GM12878 (cell line): ENCODE measurements at regions of chr19 and their contacts with region 1.

Region 1: DNA sequence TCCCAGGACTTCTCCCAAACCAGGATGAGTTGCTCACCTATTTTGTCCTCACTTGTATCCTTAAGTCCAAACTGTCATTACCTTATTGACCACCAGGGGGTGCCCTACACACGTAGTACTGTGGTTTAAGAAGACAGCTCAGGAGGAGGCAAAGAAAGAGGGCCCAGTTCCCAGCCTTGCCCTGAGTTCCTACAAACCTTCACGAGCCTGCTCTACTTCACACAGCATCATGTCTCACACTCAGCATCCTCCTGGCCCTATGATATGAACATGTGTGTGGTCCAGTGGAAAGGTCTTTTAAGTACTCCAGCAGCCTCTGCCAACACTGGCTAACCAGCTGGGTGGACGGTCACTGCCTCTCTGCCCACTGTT is 8.1 kb upstream of the ZNF784 start:
- DNase-seq: peak; percentile 75
- ATAC-seq: peak; percentile 75
- H3K4me3 ChIP-seq: no peak overlapping the region
- H3K27ac ChIP-seq: no peak overlapping the region
- H3K4me1 ChIP-seq: peaks cover 19% of the 10 kb centered on the region
- H3K27me3 ChIP-seq: no peaks in the 10 kb centered on the region
- CTCF ChIP-seq: peak; percentile 75 to 85 (median 76)
- EP300 ChIP-seq: no peak
- POLR2A ChIP-seq: no peak
- RAD21 ChIP-seq: peak; percentile 91

Region 2: DNA sequence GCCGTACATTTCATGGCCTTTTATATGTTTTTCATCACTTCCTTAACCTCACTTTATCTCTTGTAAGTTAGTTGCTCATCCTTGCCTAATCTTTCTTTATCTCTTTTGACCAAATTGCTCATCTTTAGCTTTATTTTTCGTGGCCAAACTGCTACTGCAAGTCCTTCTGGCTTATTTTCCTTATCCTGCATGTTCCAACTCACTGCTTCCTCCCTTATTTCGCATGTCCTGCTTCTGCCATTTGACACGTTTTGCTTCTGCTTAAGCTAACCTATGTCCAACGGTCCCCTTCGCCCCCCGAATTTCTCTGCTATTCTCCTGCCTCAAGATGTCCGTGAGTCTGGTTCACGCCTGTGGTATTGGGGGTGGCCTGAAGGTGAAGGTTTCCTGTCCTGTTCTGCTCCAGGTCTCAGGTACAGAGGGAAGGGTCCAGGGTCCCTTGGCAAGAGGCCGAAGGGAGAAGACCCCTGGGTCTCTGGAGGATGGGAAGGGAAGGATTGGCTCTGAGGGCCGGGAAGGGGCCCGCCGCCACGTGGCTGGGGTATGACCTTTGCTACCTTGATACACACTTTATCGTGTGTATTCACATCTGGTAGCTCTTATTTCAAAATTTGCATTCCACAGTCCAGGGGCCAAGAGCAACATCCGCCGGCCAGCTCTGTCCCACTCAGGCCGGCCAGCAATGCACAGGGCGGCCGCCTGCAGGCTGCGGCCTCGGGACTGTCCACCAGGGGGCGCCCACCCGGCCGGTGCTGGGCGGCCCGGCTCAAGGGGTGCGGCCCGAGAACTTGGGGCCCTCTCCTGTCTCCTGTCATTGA is 165.0 kb before region 1 on chr19:
- CTCF ChIA-PET with region 1: interaction called, 28 read pairs
- POLR2A ChIA-PET with region 1: no interaction called
- RAD21 ChIA-PET with region 1: interaction called, 13 read pairs
- SMC1A ChIA-PET with region 1: interaction called, 8 read pairs
- in situ Hi-C with region 1: no loop called
- intact Hi-C with region 1: loop called (anchors 5 kb)
- DNase-seq: no peak
- ATAC-seq: peak; percentile 99
- H3K4me3 ChIP-seq: no peak overlapping the region
- H3K27ac ChIP-seq: no peak overlapping the region
- H3K4me1 ChIP-seq: no peaks in the 10 kb centered on the region
- H3K27me3 ChIP-seq: no peaks in the 10 kb centered on the region
- CTCF ChIP-seq: peak; percentile 84 to 94 (median 91)
- EP300 ChIP-seq: no peak
- POLR2A ChIP-seq: no peak
- RAD21 ChIP-seq: peak; percentile 63

Region 3: DNA sequence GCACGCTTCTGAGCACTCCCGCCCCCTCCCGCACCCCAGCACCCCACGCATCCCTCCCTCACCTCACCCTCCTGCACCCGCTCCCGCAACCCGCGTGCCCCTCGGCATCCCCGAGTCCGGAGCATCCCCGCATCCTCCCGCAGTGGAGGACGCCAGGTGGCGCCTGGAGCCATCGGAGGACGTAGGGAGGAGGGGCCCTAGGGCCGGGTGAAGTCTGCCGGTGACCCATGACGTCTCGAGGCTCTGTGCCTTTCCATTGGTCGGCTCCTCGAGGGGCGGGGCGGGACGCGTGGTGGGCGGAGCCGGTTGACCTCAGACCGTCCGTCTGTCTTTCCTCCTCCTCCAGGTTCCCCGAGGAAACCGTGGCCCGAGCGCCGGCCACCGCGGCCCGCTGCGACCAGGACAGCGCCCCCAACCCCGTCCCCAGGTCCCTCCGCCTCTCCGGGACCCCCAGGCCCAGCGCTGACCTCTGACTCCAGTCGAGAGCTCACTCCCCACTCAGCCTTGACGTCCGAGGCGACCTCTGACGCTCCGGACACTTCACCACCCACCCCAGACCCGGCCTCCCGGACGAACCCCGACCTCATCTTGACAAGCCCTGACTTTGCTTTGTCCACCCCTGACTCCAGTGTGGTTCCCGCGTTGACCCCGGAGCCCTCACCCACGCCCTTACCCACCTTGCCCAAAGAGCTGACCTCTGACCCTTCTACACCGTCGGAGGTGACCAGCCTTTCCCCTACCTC is 115.4 kb before region 1 on chr19:
- CTCF ChIA-PET with region 1: interaction called, 57 read pairs
- POLR2A ChIA-PET with region 1: interaction called, 8 read pairs
- RAD21 ChIA-PET with region 1: interaction called, 20 read pairs
- SMC1A ChIA-PET with region 1: interaction called, 21 read pairs
- in situ Hi-C with region 1: loop called (anchors 5 kb)
- intact Hi-C with region 1: loop called (anchors 1 kb)
- DNase-seq: peak; percentile 66
- ATAC-seq: peak; percentile 100
- H3K4me3 ChIP-seq: peak overlapping the region; percentile 66; the same call in 1 of the 2 replicates
- H3K27ac ChIP-seq: peak overlapping the region; percentile 62
- H3K4me1 ChIP-seq: 0 out of 2 replicates have a peak, but pooled peaks cover 4% of the 10 kb centered on the region
- H3K27me3 ChIP-seq: no peaks in the 10 kb centered on the region
- CTCF ChIP-seq: peak; percentile 80 to 97 (median 96); a peak in 5 of 6 replicates
- EP300 ChIP-seq: peak in 1 of 2 experiments; percentile 16; a peak in 1 of 4 replicates
- POLR2A ChIP-seq: peak; percentile 53; the same call in 1 of the 2 replicates
- RAD21 ChIP-seq: peak; percentile 96

Region 4: GRCh38 chr19:55643348-55644176 is 11.1 kb after region 1 on chr19 and contains the start of gene ZNF581:
- CTCF ChIA-PET with region 1: interaction called, 52 read pairs
- POLR2A ChIA-PET with region 1: interaction called, 28 read pairs
- RAD21 ChIA-PET with region 1: interaction called, 36 read pairs
- SMC1A ChIA-PET with region 1: interaction called, 24 read pairs
- in situ Hi-C with region 1: no loop called
- intact Hi-C with region 1: no loop called
- DNase-seq: peak; percentile 59
- ATAC-seq: peak; percentile 60
- H3K4me3 ChIP-seq: peak within 1 kb of the TSS; percentile 95
- H3K27ac ChIP-seq: peak within 1 kb of the TSS; percentile 64
- H3K4me1 ChIP-seq: peaks cover 36% of the 10 kb centered on the region
- H3K27me3 ChIP-seq: no peaks in the 10 kb centered on the region
- CTCF ChIP-seq: no peak
- EP300 ChIP-seq: no peak
- POLR2A ChIP-seq: peak; percentile 57
- RAD21 ChIP-seq: no peak
- polyA plus RNA-seq, gene ZNF581: 4.7 to 18.1 TPM

Region 5: GRCh38 chr19:55809381-55810058 is 177.1 kb after region 1 on chr19:
- CTCF ChIA-PET with region 1: interaction called, 80 read pairs
- POLR2A ChIA-PET with region 1: no interaction called
- RAD21 ChIA-PET with region 1: interaction called, 22 read pairs
- SMC1A ChIA-PET with region 1: interaction called, 31 read pairs
- in situ Hi-C with region 1: no loop called
- intact Hi-C with region 1: loop called (anchors 2 kb)
- DNase-seq: no peak
- ATAC-seq: peak; percentile 94
- H3K4me3 ChIP-seq: no peak overlapping the region
- H3K27ac ChIP-seq: no peak overlapping the region
- H3K4me1 ChIP-seq: no peaks in the 10 kb centered on the region
- H3K27me3 ChIP-seq: no peaks in the 10 kb centered on the region
- CTCF ChIP-seq: peak; percentile 49 to 58 (median 53); a peak in 5 of 6 replicates
- EP300 ChIP-seq: no peak
- POLR2A ChIP-seq: no peak
- RAD21 ChIP-seq: peak; percentile 52

Region 6: DNA sequence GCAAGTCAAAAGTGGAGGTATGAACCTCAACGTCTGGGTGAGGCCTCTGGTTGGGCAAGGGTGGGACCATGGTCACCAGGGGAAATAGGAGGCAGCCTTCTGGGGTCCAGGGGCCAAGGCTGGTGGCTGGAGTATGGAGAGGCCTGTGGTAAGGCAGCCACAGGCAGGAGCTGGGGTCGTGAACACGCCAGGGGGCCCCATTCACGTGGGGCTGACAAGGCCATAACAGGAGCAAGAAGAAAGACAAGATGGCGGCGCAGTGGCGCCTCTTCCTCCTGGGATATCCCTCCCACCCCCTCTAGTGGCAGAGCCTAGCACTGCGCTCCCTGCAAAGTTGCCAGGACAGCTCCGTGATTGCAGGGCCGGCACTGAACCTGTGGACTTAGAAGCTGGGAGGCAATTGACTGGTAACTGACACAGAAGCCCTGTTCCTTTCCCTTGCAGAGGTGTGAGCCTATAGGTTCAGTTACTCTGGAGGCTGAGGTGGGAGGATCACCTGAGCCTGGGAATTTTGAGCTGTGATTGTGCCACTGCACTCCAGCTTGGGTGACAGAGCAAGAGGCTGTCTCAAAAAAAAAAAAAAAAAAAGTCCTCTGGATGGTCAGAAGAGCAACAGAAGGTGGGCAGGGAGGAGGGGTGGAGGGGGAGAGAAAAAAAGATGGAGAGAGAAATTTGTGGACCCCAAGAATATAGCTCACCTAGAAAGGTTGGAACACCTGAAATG is 620.4 kb after region 1 on chr19:
- CTCF ChIA-PET with region 1: interaction called, 14 read pairs
- POLR2A ChIA-PET with region 1: no interaction called
- RAD21 ChIA-PET with region 1: no interaction called
- SMC1A ChIA-PET with region 1: no interaction called
- in situ Hi-C with region 1: no loop called
- intact Hi-C with region 1: no loop called
- DNase-seq: no peak
- ATAC-seq: peak; percentile 84
- H3K4me3 ChIP-seq: no peak overlapping the region
- H3K27ac ChIP-seq: no peak overlapping the region
- H3K4me1 ChIP-seq: no peaks in the 10 kb centered on the region
- H3K27me3 ChIP-seq: no peaks in the 10 kb centered on the region
- CTCF ChIP-seq: peak; percentile 61 to 86 (median 78)
- EP300 ChIP-seq: no peak
- POLR2A ChIP-seq: no peak
- RAD21 ChIP-seq: peak; percentile 56